CD8-positive, alpha-beta T cell (primary cell): ENCODE measurements at regions of chr17 and their contacts with region 1.

Region 1: GRCh38 chr17:38735161-38735997 is 5.2 kb downstream of the CISD3 start:
- DNase-seq: peak; percentile 54 to 90 (median 80)
- ATAC-seq: peak; percentile 55
- H3K4me3 ChIP-seq: no peak overlapping the region
- H3K4me3 Mint-ChIP-seq: no peak overlapping the region
- H3K27ac ChIP-seq: no peak overlapping the region
- H3K27ac Mint-ChIP-seq: no peak overlapping the region
- H3K4me1 ChIP-seq: peaks cover 28% of the 10 kb centered on the region
- H3K4me1 Mint-ChIP-seq: peaks cover 42% of the 10 kb centered on the region
- H3K27me3 ChIP-seq: no peaks in the 10 kb centered on the region
- H3K27me3 Mint-ChIP-seq: no peaks in the 10 kb centered on the region
- CTCF ChIP-seq: peak; percentile 86

Region 2: DNA sequence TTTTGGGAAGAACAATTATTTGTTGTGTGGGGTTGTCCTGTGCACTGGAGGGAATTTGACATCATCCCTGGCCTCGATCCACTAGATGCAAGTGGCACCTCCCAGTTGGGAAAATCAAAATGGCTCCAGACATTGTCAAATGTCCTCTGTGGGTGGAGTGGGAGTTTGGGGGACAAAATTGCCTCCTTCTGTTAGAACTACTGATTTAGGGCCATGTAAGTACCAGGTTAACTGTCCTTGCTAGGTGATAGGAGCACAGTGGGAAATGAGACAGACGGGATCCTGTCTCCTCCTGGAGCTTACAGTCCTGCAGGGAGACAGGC is 250.3 kb before region 1 on chr17:
- CTCF ChIA-PET with region 1: no interaction called
- POLR2A ChIA-PET with region 1: no interaction called
- intact Hi-C with region 1: loop called (anchors 5 kb)
- DNase-seq: no peak
- ATAC-seq: no peak
- H3K4me3 ChIP-seq: no peak overlapping the region
- H3K4me3 Mint-ChIP-seq: no peak overlapping the region
- H3K27ac ChIP-seq: no peak overlapping the region
- H3K27ac Mint-ChIP-seq: no peak overlapping the region
- H3K4me1 ChIP-seq: no peaks in the 10 kb centered on the region
- H3K4me1 Mint-ChIP-seq: peaks cover 6% of the 10 kb centered on the region
- H3K27me3 ChIP-seq: no peaks in the 10 kb centered on the region
- H3K27me3 Mint-ChIP-seq: peaks cover 7% of the 10 kb centered on the region
- CTCF ChIP-seq: no peak

Region 3: DNA sequence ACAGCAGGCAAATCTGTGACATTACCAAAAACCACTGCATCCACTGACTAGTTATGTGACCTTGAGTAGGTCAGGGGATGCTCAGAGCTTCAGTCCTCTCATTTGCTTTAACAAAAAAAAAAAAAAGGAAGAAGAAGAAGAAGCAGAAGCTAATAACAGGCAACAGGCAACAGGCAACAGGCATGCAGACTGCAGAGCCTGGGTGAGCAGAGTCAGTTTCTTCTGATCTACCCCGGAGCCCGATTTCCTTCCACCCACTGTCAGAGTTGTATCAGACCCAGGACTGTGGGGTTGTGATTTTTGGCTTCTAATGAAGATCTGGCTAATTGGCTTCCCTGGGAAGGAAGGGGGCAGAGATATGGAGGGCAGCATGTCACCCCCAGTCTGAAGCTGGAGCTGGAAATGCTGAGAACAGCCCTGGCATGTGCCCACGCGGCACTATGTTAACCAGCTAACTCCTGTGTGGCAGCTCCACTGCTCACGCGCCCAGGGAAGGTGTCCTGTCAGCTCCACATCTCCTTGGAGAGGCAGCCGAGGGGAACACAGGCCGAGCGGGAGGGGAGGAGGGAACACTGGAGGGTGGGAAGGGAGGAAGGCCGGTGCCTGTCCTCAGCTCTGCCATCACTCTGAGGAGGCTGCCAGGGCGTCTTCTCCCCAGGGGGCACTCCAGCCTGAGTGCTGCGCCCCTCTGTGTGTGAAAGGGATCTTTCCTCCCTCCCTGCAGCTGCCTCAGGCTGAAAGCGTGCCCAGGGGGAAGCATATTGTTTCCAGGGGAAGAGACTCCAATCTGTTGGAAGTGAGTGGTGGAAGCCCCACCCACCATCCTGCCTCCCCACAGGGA is 147.2 kb before region 1 on chr17:
- CTCF ChIA-PET with region 1: no interaction called
- POLR2A ChIA-PET with region 1: no interaction called
- intact Hi-C with region 1: no loop called
- DNase-seq: no peak
- ATAC-seq: no peak
- H3K4me3 ChIP-seq: no peak overlapping the region
- H3K4me3 Mint-ChIP-seq: no peak overlapping the region
- H3K27ac ChIP-seq: no peak overlapping the region
- H3K27ac Mint-ChIP-seq: no peak overlapping the region
- H3K4me1 ChIP-seq: peaks cover 20% of the 10 kb centered on the region
- H3K4me1 Mint-ChIP-seq: peaks cover 25% of the 10 kb centered on the region
- H3K27me3 ChIP-seq: peaks cover 0 to 36% of the 10 kb centered on the region in 2 experiments
- H3K27me3 Mint-ChIP-seq: peaks cover 66% of the 10 kb centered on the region
- CTCF ChIP-seq: no peak

Region 4: GRCh38 chr17:38667099-38667786 is 68.1 kb before region 1 on chr17:
- CTCF ChIA-PET with region 1: interaction called, 45 read pairs
- POLR2A ChIA-PET with region 1: no interaction called
- intact Hi-C with region 1: no loop called
- DNase-seq: peak in 7 of 9 experiments; percentile 27 to 72 (median 61)
- ATAC-seq: peak; percentile 70
- H3K4me3 ChIP-seq: no peak overlapping the region
- H3K4me3 Mint-ChIP-seq: no peak overlapping the region
- H3K27ac ChIP-seq: no peak overlapping the region
- H3K27ac Mint-ChIP-seq: no peak overlapping the region
- H3K4me1 ChIP-seq: no peaks in the 10 kb centered on the region
- H3K4me1 Mint-ChIP-seq: peaks cover 6% of the 10 kb centered on the region
- H3K27me3 ChIP-seq: peaks cover 2 to 12% of the 10 kb centered on the region in 2 experiments
- H3K27me3 Mint-ChIP-seq: peaks cover 61% of the 10 kb centered on the region
- CTCF ChIP-seq: peak; percentile 92

Region 5: DNA sequence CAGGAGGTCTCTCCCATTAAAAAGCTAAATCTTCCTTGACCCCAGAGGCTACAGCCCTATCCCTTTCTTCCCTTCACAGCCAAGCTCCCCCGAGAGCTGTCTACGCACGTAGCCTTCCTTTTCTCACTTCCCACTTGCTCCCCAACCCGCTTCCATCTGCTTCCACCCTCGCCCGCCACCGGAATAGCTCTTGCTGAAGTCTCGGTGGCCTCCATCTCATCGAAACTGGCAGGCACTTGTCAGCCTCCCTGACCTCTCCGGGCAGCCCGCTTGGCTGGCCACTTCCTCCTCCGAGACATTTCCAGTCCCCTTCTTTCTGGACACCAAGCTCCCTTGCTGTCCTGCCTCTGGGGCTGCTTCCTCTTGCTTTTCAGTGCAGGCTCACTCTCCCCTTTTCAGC is 49.9 kb before region 1 on chr17:
- CTCF ChIA-PET with region 1: interaction called, 162 read pairs
- POLR2A ChIA-PET with region 1: no interaction called
- intact Hi-C with region 1: no loop called
- DNase-seq: no peak
- ATAC-seq: no peak
- H3K4me3 ChIP-seq: no peak overlapping the region
- H3K4me3 Mint-ChIP-seq: no peak overlapping the region
- H3K27ac ChIP-seq: no peak overlapping the region
- H3K27ac Mint-ChIP-seq: no peak overlapping the region
- H3K4me1 ChIP-seq: no peaks in the 10 kb centered on the region
- H3K4me1 Mint-ChIP-seq: no peaks in the 10 kb centered on the region
- H3K27me3 ChIP-seq: no peaks in the 10 kb centered on the region
- H3K27me3 Mint-ChIP-seq: no peaks in the 10 kb centered on the region
- CTCF ChIP-seq: no peak

Region 6: GRCh38 chr17:38709864-38710603 is 25.3 kb before region 1 on chr17:
- CTCF ChIA-PET with region 1: interaction called, 16 read pairs
- POLR2A ChIA-PET with region 1: interaction called, 25 read pairs
- intact Hi-C with region 1: loop called in 1 of 2 experiments (anchors 1 kb)
- DNase-seq: no peak
- ATAC-seq: no peak
- H3K4me3 ChIP-seq: no peak overlapping the region
- H3K4me3 Mint-ChIP-seq: no peak overlapping the region
- H3K27ac ChIP-seq: no peak overlapping the region
- H3K27ac Mint-ChIP-seq: peak overlapping the region; percentile 84
- H3K4me1 ChIP-seq: peaks cover 32% of the 10 kb centered on the region
- H3K4me1 Mint-ChIP-seq: peaks cover 42% of the 10 kb centered on the region
- H3K27me3 ChIP-seq: no peaks in the 10 kb centered on the region
- H3K27me3 Mint-ChIP-seq: no peaks in the 10 kb centered on the region
- CTCF ChIP-seq: no peak

Region 7: GRCh38 chr17:38724337-38724988 is 10.9 kb before region 1 on chr17:
- CTCF ChIA-PET with region 1: interaction called, 11 read pairs
- POLR2A ChIA-PET with region 1: interaction called, 3 read pairs
- intact Hi-C with region 1: no loop called
- DNase-seq: peak in 2 of 9 experiments; percentile 45 to 47
- ATAC-seq: no peak
- H3K4me3 ChIP-seq: no peak overlapping the region
- H3K4me3 Mint-ChIP-seq: no peak overlapping the region
- H3K27ac ChIP-seq: peak overlapping the region in 1 of 2 experiments; percentile 71
- H3K27ac Mint-ChIP-seq: peak overlapping the region; percentile 77
- H3K4me1 ChIP-seq: peaks cover 57% of the 10 kb centered on the region
- H3K4me1 Mint-ChIP-seq: peaks cover 61% of the 10 kb centered on the region
- H3K27me3 ChIP-seq: no peaks in the 10 kb centered on the region
- H3K27me3 Mint-ChIP-seq: no peaks in the 10 kb centered on the region
- CTCF ChIP-seq: no peak

Region 8: GRCh38 chr17:38809828-38810227 is 74.4 kb after region 1 on chr17:
- CTCF ChIA-PET with region 1: no interaction called
- POLR2A ChIA-PET with region 1: no interaction called
- intact Hi-C with region 1: no loop called
- DNase-seq: no peak
- ATAC-seq: no peak
- H3K4me3 ChIP-seq: no peak overlapping the region
- H3K4me3 Mint-ChIP-seq: no peak overlapping the region
- H3K27ac ChIP-seq: no peak overlapping the region
- H3K27ac Mint-ChIP-seq: no peak overlapping the region
- H3K4me1 ChIP-seq: no peaks in the 10 kb centered on the region
- H3K4me1 Mint-ChIP-seq: no peaks in the 10 kb centered on the region
- H3K27me3 ChIP-seq: no peaks in the 10 kb centered on the region
- H3K27me3 Mint-ChIP-seq: no peaks in the 10 kb centered on the region
- CTCF ChIP-seq: no peak